Uterus (tissue), 4 donors: ENCODE measurements at regions of chr17 and their contacts with region 1.

Region 1: GRCh38 chr17:2383628-2384167 is 17.2 kb downstream of the MNT start:
- DNase-seq: no peak
- H3K4me3 ChIP-seq: no peak overlapping the region
- H3K27ac ChIP-seq: peak overlapping the region; percentile 43 to 61
- H3K4me1 ChIP-seq: no peaks in the 10 kb centered on the region
- H3K27me3 ChIP-seq: no peaks in the 10 kb centered on the region
- CTCF ChIP-seq: no peak
- POLR2A ChIP-seq: no peak

Region 2: DNA sequence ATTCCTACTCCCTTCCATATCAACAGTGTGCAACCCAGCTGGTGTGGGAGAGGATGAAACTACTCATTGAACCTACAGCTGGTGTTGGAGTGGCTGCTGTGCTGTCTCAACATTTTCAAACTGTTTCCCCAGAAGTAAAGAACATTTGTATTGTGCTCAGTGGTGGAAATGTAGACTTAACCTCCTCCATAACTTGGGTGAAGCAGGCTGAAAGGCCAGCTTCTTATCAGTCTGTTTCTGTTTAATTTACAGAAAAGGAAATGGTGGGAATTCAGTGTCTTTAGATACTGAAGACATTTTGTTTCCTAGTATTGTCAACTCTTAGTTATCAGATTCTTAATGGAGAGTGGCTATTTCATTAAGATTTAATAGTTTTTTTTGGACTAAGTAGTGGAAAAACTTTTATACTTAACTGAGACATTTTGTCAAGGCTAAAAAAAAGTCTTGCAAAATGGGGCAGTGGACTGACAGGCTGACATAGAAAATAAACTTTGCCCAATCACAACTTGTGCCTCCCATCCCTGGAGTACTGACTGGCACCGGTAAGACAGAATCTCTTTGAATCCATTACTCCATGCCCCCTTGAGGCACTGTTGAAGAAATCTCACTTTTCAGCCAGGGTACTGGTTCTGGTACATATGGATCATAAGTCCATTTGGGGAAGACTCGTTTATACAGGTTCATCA is 59.9 kb before region 1 on chr17:
- intact Hi-C with region 1: no loop called
- DNase-seq: no peak
- H3K4me3 ChIP-seq: no peak overlapping the region
- H3K27ac ChIP-seq: no peak overlapping the region
- H3K4me1 ChIP-seq: no peaks in the 10 kb centered on the region
- H3K27me3 ChIP-seq: no peaks in the 10 kb centered on the region
- CTCF ChIP-seq: no peak
- POLR2A ChIP-seq: no peak

Region 3: GRCh38 chr17:2412561-2413021 is 28.9 kb after region 1 on chr17:
- intact Hi-C with region 1: loop called (anchors 2 kb)
- DNase-seq: no peak
- H3K4me3 ChIP-seq: no peak overlapping the region
- H3K27ac ChIP-seq: no peak overlapping the region
- H3K4me1 ChIP-seq: no peaks in the 10 kb centered on the region
- H3K27me3 ChIP-seq: no peaks in the 10 kb centered on the region
- CTCF ChIP-seq: no peak
- POLR2A ChIP-seq: no peak